ENCODE measurements at regions of chr6 and their contacts with region 1.

Region 1: GRCh38 chr6:161370880-161371279 is 97.0 kb upstream of the AGPAT4 start:
- DNase-seq: no peak
- H3K4me3 ChIP-seq: no peak overlapping the region
- H3K27ac ChIP-seq: no peak overlapping the region
- H3K4me1 ChIP-seq: peaks cover 0 to 12% (median 6%) of the 10 kb centered on the region in 4 donors
- H3K27me3 ChIP-seq: no peaks in the 10 kb centered on the region
- CTCF ChIP-seq: peak; percentile 70 to 74

Region 2: GRCh38 chr6:160930547-160931377 is 440.1 kb before region 1 on chr6:
- intact Hi-C with region 1: loop called (anchors 5 kb)
- DNase-seq: peak; percentile 60 to 87
- H3K4me3 ChIP-seq: peak overlapping the region; percentile 51 to 58
- H3K27ac ChIP-seq: peak overlapping the region; percentile 34 to 62
- H3K4me1 ChIP-seq: peaks cover 0 to 17% (median 10%) of the 10 kb centered on the region in 4 donors
- H3K27me3 ChIP-seq: peaks cover 0 to 2% of the 10 kb centered on the region in 2 donors
- CTCF ChIP-seq: peak; percentile 92

Region 3: GRCh38 chr6:161139766-161140553 is 230.9 kb before region 1 on chr6:
- intact Hi-C with region 1: loop called (anchors 5 kb)
- DNase-seq: no peak
- H3K4me3 ChIP-seq: no peak overlapping the region
- H3K27ac ChIP-seq: no peak overlapping the region
- H3K4me1 ChIP-seq: no peaks in the 10 kb centered on the region
- H3K27me3 ChIP-seq: no peaks in the 10 kb centered on the region
- CTCF ChIP-seq: no peak

Region 4: DNA sequence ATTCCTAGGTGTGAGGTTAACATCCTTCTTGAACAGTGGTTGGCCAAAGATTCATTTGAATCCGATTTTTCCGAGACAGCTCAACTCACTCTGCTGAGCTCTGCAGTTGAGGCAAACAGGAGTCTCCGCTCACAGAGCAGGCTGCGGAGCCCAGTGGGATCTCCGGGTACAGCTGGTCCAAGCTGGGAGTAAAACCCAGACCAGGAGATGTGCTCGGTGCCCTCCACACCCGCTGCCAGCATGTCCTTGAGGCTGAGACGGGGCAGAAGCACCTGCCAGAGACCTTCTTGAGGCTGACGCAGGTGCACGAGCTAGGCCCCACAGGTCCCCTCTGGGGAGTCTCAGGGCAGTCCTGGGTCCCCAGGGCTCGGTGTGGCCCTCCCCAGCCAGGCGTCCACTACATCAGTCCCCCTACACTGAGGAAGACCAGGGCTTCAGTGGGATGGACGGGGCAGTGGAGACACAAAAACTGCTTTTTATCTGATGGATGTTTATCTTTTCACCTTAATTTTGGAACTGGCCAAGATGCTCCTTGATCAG is 216.0 kb before region 1 on chr6:
- intact Hi-C with region 1: loop called (anchors 5 kb)
- DNase-seq: no peak
- H3K4me3 ChIP-seq: no peak overlapping the region
- H3K27ac ChIP-seq: no peak overlapping the region
- H3K4me1 ChIP-seq: no peaks in the 10 kb centered on the region
- H3K27me3 ChIP-seq: no peaks in the 10 kb centered on the region
- CTCF ChIP-seq: no peak

Region 5: GRCh38 chr6:161301338-161301737 is 69.5 kb before region 1 on chr6:
- intact Hi-C with region 1: no loop called
- DNase-seq: peak in 1 of 2 donors; percentile 35
- H3K4me3 ChIP-seq: no peak overlapping the region
- H3K27ac ChIP-seq: no peak overlapping the region
- H3K4me1 ChIP-seq: peaks cover 0 to 3% (median 0%) of the 10 kb centered on the region in 4 donors
- H3K27me3 ChIP-seq: no peaks in the 10 kb centered on the region
- CTCF ChIP-seq: no peak

Region 6: DNA sequence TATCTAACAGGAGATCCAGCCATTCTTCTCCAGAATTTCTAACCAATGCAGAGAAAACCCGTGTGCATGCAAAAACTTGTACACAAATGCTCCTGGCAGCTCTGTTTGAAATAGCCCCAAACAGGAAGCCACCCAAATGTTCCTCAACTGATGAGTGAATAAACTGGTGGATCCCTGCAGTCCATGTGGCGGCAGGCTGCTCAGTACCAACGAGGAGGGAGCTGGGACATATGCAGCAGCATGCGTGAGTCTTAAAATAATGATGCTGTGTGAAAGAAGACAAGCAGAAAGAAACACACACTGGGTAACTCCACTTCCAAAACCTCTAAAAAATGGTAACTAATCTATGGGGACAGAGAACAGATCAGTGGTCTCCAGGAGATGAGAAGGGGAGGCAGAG is 445.1 kb after region 1 on chr6:
- intact Hi-C with region 1: no loop called
- DNase-seq: no peak
- H3K4me3 ChIP-seq: no peak overlapping the region
- H3K27ac ChIP-seq: no peak overlapping the region
- H3K4me1 ChIP-seq: no peaks in the 10 kb centered on the region
- H3K27me3 ChIP-seq: no peaks in the 10 kb centered on the region
- CTCF ChIP-seq: no peak

Region 7: DNA sequence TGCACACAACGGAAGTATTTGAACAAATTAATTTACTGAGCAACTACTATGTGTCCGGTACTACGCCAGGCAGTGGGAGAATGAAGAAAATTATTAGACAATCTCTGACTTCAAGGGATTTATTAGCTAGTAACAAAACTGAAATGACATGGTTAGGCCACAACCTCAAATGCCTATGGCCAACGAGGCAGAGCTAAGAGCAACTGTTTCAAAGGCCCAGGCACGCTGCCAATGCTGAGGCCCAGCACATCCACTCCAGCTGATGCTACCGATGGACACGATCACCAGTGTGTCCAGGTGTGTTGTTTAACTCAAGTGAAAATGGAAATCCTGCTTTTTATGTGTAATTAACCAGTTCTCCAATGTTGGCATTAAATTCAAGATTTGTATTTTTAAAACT is 935.7 kb after region 1 on chr6:
- intact Hi-C with region 1: no loop called
- DNase-seq: no peak
- H3K4me3 ChIP-seq: no peak overlapping the region
- H3K27ac ChIP-seq: no peak overlapping the region
- H3K4me1 ChIP-seq: no peaks in the 10 kb centered on the region
- H3K27me3 ChIP-seq: no peaks in the 10 kb centered on the region
- CTCF ChIP-seq: no peak